Activated CD8-positive, alpha-beta T cell treated with anti-CD3 and anti-CD28 coated beads for 36 hours (primary cell): ENCODE measurements at regions of chr11 and their contacts with region 1.

Region 1: GRCh38 chr11:63738720-63739360 is 29.7 kb downstream of the ZFTA start:
- DNase-seq: peak; percentile 86
- ATAC-seq: peak; percentile 47
- H3K4me3 Mint-ChIP-seq: no peak overlapping the region
- H3K27ac Mint-ChIP-seq: peak overlapping the region; percentile 46
- H3K4me1 Mint-ChIP-seq: peaks cover 6% of the 10 kb centered on the region
- H3K27me3 Mint-ChIP-seq: no peaks in the 10 kb centered on the region
- CTCF ChIP-seq: peak; percentile 99

Region 2: DNA sequence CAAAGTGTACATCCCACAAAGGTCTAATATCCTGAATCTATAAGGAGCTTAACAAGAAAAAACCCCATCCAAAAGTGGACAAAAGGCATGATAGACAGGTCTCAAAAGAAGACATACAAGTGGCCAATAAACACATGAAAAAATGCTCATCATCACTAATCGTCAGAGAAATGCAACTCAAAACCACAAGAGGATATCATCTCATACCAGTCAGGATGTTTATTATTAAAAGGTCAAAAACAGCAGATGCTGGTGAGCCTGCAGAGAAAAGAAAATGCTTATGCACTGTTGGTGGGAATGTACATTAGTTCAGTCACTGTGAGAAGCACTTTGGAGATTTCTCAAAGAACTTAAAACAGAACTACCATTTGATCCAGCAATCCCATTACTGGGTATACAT is 220.3 kb before region 1 on chr11:
- CTCF ChIA-PET with region 1: no interaction called
- POLR2A ChIA-PET with region 1: no interaction called
- intact Hi-C with region 1: no loop called
- DNase-seq: no peak
- ATAC-seq: peak; percentile 66
- H3K4me3 Mint-ChIP-seq: no peak overlapping the region
- H3K27ac Mint-ChIP-seq: peak overlapping the region; percentile 64
- H3K4me1 Mint-ChIP-seq: peaks cover 11% of the 10 kb centered on the region
- H3K27me3 Mint-ChIP-seq: no peaks in the 10 kb centered on the region
- CTCF ChIP-seq: no peak

Region 3: DNA sequence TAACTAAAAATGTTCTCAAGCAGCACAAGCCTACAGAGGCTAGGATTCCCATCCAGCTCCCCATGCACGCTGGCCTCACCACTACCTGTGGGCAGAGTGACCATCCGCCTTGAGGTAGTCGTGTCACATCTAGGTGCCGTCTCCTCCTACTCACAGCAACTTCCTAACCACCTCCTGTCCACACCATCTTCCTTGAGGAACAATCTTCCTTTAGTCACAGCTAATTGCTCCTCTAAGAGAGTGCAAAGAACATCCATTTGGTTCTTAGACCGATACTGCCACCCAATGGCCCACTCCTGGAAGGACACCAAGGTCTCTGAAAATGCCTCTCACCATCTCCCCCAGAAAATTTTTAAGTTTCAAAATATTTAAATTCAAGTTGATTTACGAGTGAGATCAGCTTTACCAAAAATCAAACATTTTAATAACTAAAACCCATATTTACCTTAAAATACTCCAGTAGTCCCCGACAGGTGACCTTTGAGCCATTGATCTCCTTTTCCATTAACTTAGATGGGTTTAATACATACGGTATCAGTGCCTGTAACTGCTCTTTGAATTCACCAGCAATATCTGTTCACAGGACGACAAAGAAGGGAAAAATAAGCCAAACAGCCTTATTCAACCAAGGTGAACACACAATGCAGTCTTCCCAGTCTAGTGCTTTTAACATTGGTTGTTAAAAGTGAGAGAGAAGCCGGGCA is 102.9 kb before region 1 on chr11:
- CTCF ChIA-PET with region 1: interaction called, 17 read pairs
- POLR2A ChIA-PET with region 1: interaction called, 3 read pairs
- intact Hi-C with region 1: no loop called
- DNase-seq: peak; percentile 76
- ATAC-seq: peak; percentile 83
- H3K4me3 Mint-ChIP-seq: no peak overlapping the region
- H3K27ac Mint-ChIP-seq: no peak overlapping the region
- H3K4me1 Mint-ChIP-seq: peaks cover 11% of the 10 kb centered on the region
- H3K27me3 Mint-ChIP-seq: no peaks in the 10 kb centered on the region
- CTCF ChIP-seq: peak; percentile 86

Region 4: GRCh38 chr11:63671322-63672155 is 67.3 kb before region 1 on chr11 and contains the start of gene ATL3:
- CTCF ChIA-PET with region 1: interaction called, 26 read pairs
- POLR2A ChIA-PET with region 1: no interaction called
- intact Hi-C with region 1: no loop called
- DNase-seq: peak; percentile 97
- ATAC-seq: peak; percentile 92
- H3K4me3 Mint-ChIP-seq: peak within 1 kb of the TSS; percentile 70
- H3K27ac Mint-ChIP-seq: peak within 1 kb of the TSS; percentile 86
- H3K4me1 Mint-ChIP-seq: peaks cover 26% of the 10 kb centered on the region
- H3K27me3 Mint-ChIP-seq: no peaks in the 10 kb centered on the region
- CTCF ChIP-seq: no peak
- total RNA-seq, gene ATL3: 24.1 to 24.4 TPM

Region 5: GRCh38 chr11:63694596-63694995 is 44.2 kb before region 1 on chr11:
- CTCF ChIA-PET with region 1: interaction called, 11 read pairs
- POLR2A ChIA-PET with region 1: no interaction called
- intact Hi-C with region 1: no loop called
- DNase-seq: no peak
- ATAC-seq: no peak
- H3K4me3 Mint-ChIP-seq: no peak overlapping the region
- H3K27ac Mint-ChIP-seq: no peak overlapping the region
- H3K4me1 Mint-ChIP-seq: peaks cover 8% of the 10 kb centered on the region
- H3K27me3 Mint-ChIP-seq: no peaks in the 10 kb centered on the region
- CTCF ChIP-seq: no peak

Region 6: DNA sequence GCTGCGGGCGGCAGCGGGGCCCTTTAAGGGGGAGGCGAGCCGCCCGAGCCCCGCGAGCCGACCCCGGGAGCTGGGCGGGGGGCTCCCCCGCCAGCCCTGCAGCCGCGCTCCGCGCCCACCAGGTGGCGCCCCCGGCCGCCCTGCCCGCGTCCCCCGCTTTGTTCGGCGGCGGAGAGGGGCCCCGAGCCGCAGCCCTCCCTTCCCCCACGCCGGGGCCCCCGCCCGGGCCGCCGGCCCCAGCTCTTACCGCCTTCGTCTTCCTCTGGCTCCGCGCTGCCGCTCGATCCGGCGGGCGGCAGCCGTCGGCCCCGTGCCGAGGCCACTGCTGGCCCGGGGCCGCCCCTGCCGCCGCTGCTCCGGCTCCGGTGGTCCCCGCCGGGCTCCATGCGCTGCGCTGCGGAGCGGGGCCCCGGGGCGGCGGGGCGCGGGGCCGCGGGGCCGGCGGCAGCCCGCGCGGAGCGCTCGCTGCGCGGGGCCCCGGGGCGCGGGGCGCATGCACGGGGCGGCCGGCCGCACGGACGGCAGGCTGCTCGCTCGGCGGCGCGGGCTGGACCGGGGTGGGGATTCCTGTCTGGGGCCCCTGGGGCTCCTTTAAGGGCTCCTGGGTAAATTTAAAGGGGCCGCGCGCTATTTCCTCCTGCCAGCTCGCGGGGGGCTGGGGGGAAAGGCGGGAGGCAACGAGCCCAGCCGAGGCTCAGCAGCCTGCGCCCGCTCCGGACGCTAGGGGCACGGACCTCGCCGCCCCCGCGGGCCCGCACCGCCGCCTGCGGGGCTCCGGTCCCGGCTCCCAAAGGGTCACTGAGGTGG is 29.6 kb after region 1 on chr11 and contains the start of gene ZFTA:
- CTCF ChIA-PET with region 1: interaction called, 12 read pairs
- POLR2A ChIA-PET with region 1: no interaction called
- intact Hi-C with region 1: no loop called
- DNase-seq: peak; percentile 71
- ATAC-seq: peak; percentile 72
- H3K4me3 Mint-ChIP-seq: peak within 1 kb of the TSS; percentile 82
- H3K27ac Mint-ChIP-seq: peak within 1 kb of the TSS; percentile 44
- H3K4me1 Mint-ChIP-seq: peaks cover 10% of the 10 kb centered on the region
- H3K27me3 Mint-ChIP-seq: peaks cover 8% of the 10 kb centered on the region
- CTCF ChIP-seq: peak; percentile 72
- total RNA-seq, gene ZFTA: 4.1 to 4.3 TPM

Region 7: GRCh38 chr11:64343767-64344552 is 605.1 kb after region 1 on chr11:
- CTCF ChIA-PET with region 1: no interaction called
- POLR2A ChIA-PET with region 1: no interaction called
- intact Hi-C with region 1: no loop called
- DNase-seq: peak; percentile 35
- ATAC-seq: no peak
- H3K4me3 Mint-ChIP-seq: no peak overlapping the region
- H3K27ac Mint-ChIP-seq: no peak overlapping the region
- H3K4me1 Mint-ChIP-seq: peaks cover 29% of the 10 kb centered on the region
- H3K27me3 Mint-ChIP-seq: no peaks in the 10 kb centered on the region
- CTCF ChIP-seq: peak; percentile 17